ENCODE measurements at regions of chr3 and their contacts with region 1.

Region 1: DNA sequence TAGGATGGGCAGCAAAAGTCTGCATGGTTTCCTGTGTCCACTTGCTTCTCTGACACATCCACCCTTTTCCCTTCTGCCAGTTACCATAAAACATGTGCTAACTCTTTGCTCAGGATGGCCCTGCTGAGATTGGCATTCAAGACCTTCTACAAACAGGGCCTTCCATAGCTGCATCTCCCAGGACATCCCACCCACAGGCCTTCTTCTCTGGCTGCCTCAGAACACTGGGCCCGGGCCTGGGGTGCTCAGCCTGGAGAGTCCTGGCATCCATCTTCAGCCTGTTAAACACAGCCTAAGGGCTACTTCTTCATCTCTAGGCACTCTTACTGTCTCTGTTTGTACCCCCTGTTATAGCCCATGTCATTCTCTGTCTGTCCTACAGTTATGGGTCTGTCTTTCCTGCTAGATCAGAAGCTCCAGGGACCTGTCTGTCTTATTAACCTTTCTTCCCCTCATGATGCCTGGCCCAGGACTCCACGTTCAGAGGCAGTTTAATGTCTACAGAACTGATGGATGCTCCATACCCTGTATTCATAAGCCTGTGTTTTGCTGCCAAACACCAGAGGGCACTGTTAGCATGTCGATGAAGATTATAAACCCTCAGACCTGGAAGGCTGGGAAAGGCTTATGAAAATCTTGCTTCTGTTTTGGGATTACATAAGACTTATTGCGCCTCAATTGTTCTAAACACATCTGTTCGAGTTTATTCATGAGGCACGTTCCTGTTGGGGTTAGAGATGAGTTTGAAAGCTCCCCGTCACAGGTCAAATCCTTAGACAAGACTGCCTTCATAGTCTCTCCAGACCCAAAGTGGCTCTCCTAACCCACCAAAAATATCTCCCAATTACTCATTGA is 16.5 kb downstream of the SEMA3G start:
- DNase-seq: peak in 4 of 5 donors; percentile 54 to 74 (median 70)
- ATAC-seq: peak; percentile 68 to 79 (median 77)
- H3K4me3 ChIP-seq: no peak overlapping the region
- H3K27ac ChIP-seq: peak overlapping the region in 9 of 12 donors; percentile 15 to 77 (median 61)
- H3K4me1 ChIP-seq: peaks cover 13 to 47% (median 38%) of the 10 kb centered on the region in 12 donors
- H3K27me3 ChIP-seq: no peaks in the 10 kb centered on the region
- CTCF ChIP-seq: peak; percentile 65 to 87 (median 80)
- POLR2A ChIP-seq: peak in 1 of 2 donors; percentile 23

Region 2: DNA sequence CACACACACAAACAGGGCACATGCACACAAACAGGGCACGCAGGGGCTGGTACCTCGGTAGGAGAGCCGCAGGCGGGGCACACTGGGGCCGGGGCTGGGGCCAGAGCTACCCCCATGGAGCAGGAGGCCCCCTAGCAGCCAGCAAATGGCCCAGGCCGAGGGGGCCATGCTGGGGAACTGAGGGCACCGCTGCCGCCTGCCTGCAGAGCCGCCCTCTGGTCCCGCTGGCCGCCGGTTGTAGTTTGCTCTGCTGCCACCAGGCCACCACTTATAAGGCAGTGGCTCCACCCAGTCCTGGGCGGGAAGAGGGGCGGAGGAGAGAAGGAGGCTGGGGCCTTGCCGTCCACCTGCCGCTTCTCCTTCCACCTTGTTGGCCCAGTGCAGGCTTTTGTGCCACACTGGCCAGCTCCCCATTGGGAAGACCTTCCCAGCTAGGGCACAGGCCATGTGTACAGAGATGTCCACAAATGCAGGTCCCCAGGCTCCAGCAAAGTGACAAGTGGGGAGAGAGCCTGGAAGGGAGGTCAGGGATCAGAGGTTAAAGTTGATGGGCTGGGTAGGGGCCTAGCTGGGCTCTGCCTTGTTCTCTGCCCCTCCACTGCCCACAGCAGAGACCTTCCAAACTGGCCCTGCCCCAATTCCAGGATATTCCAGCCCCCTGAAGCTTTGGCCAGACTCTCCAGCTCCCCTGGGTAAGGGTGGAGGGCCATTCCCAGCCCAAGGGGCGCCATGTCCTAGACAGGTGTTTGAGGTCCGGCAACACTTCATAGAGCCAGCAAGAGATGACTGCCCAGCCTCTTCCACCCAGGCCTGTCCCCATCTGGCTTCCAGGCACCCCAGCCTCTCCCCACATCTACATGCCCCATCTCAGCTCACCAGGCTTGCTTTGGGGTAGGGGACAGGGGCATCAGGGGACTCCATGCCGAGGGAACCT is 16.7 kb after region 1 on chr3 and contains the start of gene SEMA3G:
- intact Hi-C with region 1: loop called (anchors 1 to 2 kb)
- DNase-seq: peak; percentile 71 to 84 (median 82)
- ATAC-seq: peak; percentile 29 to 60 (median 58)
- H3K4me3 ChIP-seq: peak within 1 kb of the TSS in 11 of 12 donors; percentile 18 to 54 (median 42)
- H3K27ac ChIP-seq: peak within 1 kb of the TSS in 8 of 12 donors; percentile 24 to 65 (median 60)
- H3K4me1 ChIP-seq: peaks cover 0 to 39% (median 14%) of the 10 kb centered on the region in 12 donors
- H3K27me3 ChIP-seq: no peaks in the 10 kb centered on the region
- CTCF ChIP-seq: peak; percentile 33 to 67 (median 56)
- POLR2A ChIP-seq: peak; percentile 18 to 63
- total RNA-seq, gene SEMA3G: 13.4 to 29.0 (median 14.4) TPM

Region 3: DNA sequence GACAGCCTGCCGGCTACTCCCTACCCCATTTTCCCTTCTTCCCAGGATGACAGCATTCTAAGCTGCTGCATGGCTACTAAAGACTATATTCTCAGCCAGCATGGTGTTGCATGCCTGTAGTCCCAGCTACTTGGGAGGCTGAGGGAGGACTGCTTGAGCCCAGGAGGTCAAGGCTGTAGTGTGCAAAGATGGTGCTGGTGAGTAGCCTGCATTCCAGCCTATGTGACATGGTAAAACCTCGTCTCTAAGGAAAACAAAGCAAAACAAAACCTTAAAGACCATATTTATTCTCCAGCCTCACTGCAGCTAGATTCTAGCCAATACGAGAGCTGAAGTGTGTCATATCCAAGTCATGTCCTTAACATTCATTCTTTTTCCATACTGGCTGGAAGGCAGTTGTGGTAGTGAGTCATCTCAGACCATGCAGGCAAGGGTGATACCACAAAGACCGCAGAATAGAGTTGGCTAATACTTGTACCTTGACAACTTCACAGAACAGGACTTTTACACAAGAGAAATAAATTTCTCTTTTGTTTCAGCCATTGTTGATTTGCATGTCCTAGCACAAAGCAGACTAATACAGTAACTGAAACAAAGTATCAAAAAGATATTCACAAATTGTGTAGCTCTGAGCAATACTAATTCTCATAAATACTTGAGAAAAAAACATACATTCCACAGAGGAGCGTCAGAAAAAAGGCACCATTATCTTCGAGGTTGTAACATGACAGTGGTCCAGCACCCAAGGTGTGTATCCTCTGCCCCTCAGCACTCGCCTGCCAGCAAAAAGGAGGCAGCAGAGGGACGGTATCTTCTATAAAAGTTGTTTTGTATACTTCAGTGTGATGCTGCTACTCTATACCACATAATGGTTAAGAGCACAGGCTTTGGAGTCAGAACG is 242.5 kb after region 1 on chr3:
- intact Hi-C with region 1: loop called in 1 of 10 experiments (anchors 10 kb)
- DNase-seq: no peak
- ATAC-seq: peak; percentile 82 to 97 (median 90)
- H3K4me3 ChIP-seq: no peak overlapping the region
- H3K27ac ChIP-seq: peak overlapping the region in 10 of 12 donors; percentile 3 to 69 (median 24)
- H3K4me1 ChIP-seq: peaks cover 0 to 27% (median 10%) of the 10 kb centered on the region in 12 donors
- H3K27me3 ChIP-seq: no peaks in the 10 kb centered on the region
- CTCF ChIP-seq: no peak
- POLR2A ChIP-seq: no peak

Measured in heart left ventricle (tissue), 16 donors.